Mucosa of descending colon (tissue), 3 donors: ENCODE measurements at regions of chr2 and their contacts with region 1.

Region 1: DNA sequence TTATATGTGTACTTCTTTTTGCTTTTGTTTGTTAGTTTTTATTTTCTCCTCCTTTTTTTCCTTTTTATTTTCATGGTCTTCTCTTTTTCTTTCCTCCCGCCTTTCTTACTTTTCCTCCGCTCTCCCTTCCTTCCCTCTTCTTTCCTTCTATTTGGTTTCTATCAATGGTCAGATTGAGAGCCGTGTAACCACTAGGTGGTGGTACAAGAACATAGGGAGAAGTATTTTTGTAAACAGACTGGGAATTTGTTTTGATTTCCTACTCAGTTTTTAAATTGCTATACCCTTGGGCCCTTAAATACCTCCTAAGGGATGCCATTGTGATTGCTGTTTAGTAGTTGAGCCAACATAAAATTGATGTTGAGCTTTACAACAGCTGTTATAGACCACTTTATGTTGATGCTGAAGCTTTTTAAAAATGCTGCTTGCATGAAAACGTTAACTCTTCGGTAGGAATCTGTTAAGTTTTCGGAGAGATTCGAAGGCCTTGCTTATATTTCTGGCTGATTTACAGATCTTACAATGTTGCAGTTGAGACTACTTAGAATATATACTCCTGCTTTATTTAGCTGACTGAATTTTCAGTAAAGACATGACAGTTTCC is 124.2 kb downstream of the UBE2E3 start:
- DNase-seq: peak in 1 of 3 donors; percentile 58
- ATAC-seq: peak; percentile 40
- H3K4me3 ChIP-seq: no peak overlapping the region
- H3K4me1 ChIP-seq: no peaks in the 10 kb centered on the region
- CTCF ChIP-seq: no peak

Region 2: DNA sequence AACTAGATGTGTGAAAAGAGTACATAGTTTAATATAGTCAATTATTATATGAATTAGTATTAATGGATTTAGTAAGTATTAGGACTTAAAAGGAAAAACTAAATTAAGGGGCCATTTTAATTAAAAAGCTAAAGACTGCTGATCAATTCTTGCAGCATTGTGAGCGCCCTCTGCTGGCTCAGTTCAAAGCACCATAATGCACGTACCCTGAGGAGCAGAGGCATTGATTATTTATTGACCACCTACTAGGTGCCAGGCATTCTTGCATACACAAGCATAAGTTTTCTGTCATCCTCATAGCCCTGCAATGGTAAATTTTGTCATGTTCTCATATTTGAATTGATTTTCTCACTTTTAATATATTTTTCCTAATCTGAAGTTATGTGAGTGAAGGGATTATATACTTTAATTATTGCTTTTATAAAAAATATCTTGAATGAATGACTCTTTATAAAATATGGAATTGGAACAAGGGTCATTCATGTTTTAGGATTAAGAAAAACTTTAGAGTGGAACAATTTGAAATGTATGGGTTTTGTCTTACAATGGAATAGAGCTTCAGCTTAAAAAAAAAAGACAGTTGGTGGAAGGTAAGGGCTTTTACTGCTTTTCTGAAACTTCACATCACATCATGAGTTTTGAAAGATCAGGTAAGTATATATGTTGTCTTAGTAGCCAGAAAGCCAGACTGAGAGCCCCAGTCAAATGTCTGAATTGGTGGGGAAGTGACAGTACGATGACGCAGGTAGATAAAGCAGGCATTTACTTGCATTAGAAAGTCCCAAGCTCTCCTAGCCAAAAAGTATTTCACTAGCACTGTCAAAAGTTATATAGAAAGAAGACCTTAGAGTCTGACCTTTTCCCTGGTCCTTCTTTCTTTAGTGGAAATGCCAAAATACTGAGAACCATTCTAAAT is 362.3 kb after region 1 on chr2:
- intact Hi-C with region 1: loop called in 1 of 2 experiments (anchors 10 kb)
- DNase-seq: peak; percentile 72 to 90 (median 73)
- ATAC-seq: peak; percentile 60
- H3K4me3 ChIP-seq: no peak overlapping the region
- H3K4me1 ChIP-seq: no peaks in the 10 kb centered on the region
- CTCF ChIP-seq: peak; percentile 43